ENCODE measurements at regions of chr2 and their contacts with region 1.

Region 1: DNA sequence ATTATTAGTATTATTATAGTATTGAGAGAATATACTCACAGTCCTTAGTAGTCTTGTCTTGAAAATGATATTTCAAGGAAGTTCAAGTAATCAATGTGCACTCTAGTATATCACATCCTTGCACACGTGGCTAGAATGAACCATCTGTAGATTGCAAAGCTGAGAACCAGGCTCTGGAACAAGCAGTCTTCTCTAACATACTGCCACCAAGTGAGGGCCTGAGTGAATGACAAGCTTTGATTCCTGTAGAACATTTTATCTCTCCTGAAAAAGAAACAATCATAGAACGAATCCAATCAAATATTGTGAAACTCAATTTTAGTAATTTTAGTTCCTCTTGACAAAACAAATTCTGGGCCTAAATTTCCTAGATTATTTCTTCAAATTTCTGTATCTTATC is 55.3 kb upstream of the SULT1C3 start:
- DNase-seq: peak; percentile 35
- H3K4me3 ChIP-seq: no peak overlapping the region
- H3K27ac ChIP-seq: no peak overlapping the region
- H3K4me1 ChIP-seq: no peaks in the 10 kb centered on the region
- H3K27me3 ChIP-seq: no peaks in the 10 kb centered on the region
- CTCF ChIP-seq: peak; percentile 58

Region 2: DNA sequence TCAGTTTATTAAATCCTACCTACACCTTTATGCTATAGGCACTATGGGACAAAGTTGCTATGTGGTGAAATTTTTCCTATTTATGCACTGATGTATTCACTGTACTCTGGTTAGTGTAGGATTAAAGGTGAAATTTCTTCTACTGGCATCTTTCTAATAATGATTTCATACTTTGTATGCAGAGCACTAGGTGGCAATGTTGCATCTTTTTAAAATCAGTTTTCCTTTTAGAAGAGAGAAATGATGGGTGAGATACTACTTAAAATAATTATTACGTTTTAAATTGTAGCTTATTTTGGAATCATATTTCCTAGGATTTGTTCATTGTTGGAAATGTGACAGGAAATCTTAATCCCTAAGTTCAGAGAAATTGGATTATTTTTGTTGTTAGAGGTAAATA is 1546.4 kb before region 1 on chr2:
- CTCF ChIA-PET with region 1: no interaction called
- POLR2A ChIA-PET with region 1: no interaction called
- intact Hi-C with region 1: loop called (anchors 5 kb)
- DNase-seq: peak; percentile 12
- H3K4me3 ChIP-seq: no peak overlapping the region
- H3K27ac ChIP-seq: no peak overlapping the region
- H3K4me1 ChIP-seq: no peaks in the 10 kb centered on the region
- H3K27me3 ChIP-seq: no peaks in the 10 kb centered on the region
- CTCF ChIP-seq: peak; percentile 45; the same call in 1 of the 2 replicates

Region 3: GRCh38 chr2:107936433-107937359 is 247.7 kb before region 1 on chr2:
- CTCF ChIA-PET with region 1: no interaction called
- POLR2A ChIA-PET with region 1: no interaction called
- intact Hi-C with region 1: loop called (anchors 5 kb)
- DNase-seq: peak; percentile 19
- H3K4me3 ChIP-seq: no peak overlapping the region
- H3K27ac ChIP-seq: no peak overlapping the region
- H3K4me1 ChIP-seq: no peaks in the 10 kb centered on the region
- H3K27me3 ChIP-seq: no peaks in the 10 kb centered on the region
- CTCF ChIP-seq: peak; percentile 64